ENCODE measurements at regions of chr5 and their contacts with region 1.

Region 1: GRCh38 chr5:132829742-132830435 is 558 bp downstream of the SHROOM1 start:
- DNase-seq: peak; percentile 78
- ATAC-seq: peak; percentile 86
- H3K4me3 Mint-ChIP-seq: peak overlapping the region; percentile 91
- H3K27ac Mint-ChIP-seq: peak overlapping the region; percentile 41
- H3K4me1 Mint-ChIP-seq: peaks cover 14% of the 10 kb centered on the region
- H3K27me3 Mint-ChIP-seq: peaks cover 24% of the 10 kb centered on the region
- CTCF ChIP-seq: peak; percentile 27

Region 2: DNA sequence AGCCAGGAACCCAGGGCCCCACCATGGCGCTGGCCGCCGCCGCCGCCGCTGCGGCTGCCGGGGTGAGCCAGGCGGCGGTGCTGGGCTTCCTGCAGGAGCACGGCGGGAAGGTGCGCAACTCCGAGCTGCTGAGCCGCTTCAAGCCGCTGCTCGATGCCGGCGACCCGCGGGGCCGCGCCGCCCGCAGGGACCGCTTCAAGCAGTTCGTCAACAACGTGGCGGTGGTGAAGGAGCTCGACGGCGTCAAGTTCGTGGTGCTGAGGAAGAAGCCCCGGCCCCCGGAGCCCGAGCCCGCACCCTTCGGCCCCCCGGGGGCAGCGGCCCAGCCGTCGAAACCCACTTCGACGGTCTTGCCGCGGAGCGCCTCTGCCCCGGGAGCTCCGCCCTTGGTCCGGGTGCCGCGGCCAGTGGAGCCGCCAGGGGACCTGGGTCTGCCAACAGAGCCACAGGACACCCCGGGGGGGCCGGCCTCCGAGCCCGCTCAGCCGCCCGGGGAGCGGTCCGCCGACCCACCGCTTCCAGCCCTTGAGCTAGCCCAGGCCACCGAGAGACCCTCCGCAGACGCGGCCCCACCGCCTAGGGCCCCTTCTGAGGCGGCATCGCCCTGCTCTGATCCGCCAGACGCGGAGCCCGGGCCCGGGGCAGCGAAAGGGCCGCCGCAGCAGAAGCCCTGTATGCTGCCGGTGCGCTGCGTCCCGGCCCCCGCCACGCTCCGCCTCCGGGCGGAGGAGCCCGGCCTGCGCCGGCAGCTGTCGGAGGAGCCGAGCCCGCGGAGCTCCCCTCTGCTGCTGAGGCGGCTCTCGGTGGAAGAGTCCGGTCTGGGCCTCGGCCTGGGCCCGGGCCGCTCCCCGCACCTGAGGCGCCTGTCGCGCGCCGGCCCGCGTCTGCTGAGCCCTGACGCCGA is 16.0 kb before region 1 on chr5:
- CTCF ChIA-PET with region 1: interaction called, 12 read pairs
- POLR2A ChIA-PET with region 1: no interaction called
- intact Hi-C with region 1: loop called (anchors 2 kb)
- DNase-seq: peak; percentile 47
- ATAC-seq: peak; percentile 63
- H3K4me3 Mint-ChIP-seq: no peak overlapping the region
- H3K27ac Mint-ChIP-seq: no peak overlapping the region
- H3K4me1 Mint-ChIP-seq: peaks cover 10% of the 10 kb centered on the region
- H3K27me3 Mint-ChIP-seq: peaks cover 32% of the 10 kb centered on the region
- CTCF ChIP-seq: no peak

Region 3: DNA sequence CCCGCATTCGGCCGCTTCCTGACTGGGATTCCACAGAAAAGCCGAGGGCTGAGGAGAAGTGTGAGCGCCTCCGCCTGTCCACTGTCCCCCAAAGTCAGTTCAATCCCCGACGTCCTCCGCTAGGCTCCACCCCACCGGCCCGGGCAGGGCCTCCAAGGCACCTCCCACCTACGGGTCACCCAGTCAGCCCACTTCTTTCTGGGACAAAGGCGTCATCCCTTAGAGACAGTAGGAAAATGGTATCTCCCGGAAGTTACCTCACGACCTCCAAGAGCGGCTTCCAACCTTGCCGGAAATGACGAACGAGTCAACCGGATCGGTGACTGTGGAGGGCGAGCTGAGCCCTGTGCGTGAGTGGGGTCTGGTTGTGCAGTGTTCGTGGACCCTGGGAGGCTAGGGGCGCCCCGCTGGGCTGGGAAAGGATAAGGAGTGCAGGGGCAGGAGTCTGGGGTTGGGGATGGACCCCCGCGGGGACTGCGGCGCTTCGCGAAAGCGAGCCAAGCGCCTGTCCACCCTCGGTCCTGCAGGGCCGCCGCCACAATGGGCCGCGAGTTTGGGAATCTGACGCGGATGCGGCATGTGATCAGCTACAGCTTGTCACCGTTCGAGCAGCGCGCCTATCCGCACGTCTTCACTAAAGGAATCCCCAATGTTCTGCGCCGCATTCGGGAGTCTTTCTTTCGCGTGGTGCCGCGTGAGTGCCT is 36.6 kb after region 1 on chr5 and contains the starts of genes GDF9 and UQCRQ:
- CTCF ChIA-PET with region 1: interaction called, 3 read pairs
- POLR2A ChIA-PET with region 1: no interaction called
- intact Hi-C with region 1: loop called (anchors 1 kb)
- DNase-seq: peak; percentile 77
- ATAC-seq: peak; percentile 98
- H3K4me3 Mint-ChIP-seq: peak within 1 kb of the TSS; percentile 99
- H3K27ac Mint-ChIP-seq: peak within 1 kb of the TSS; percentile 98
- H3K4me1 Mint-ChIP-seq: peaks cover 25% of the 10 kb centered on the region
- H3K27me3 Mint-ChIP-seq: no peaks in the 10 kb centered on the region
- CTCF ChIP-seq: no peak
- total RNA-seq, gene GDF9: 0.29 and 0.39 TPM in 2 replicates
- total RNA-seq, gene UQCRQ: 197 and 218 TPM in 2 replicates

Region 4: DNA sequence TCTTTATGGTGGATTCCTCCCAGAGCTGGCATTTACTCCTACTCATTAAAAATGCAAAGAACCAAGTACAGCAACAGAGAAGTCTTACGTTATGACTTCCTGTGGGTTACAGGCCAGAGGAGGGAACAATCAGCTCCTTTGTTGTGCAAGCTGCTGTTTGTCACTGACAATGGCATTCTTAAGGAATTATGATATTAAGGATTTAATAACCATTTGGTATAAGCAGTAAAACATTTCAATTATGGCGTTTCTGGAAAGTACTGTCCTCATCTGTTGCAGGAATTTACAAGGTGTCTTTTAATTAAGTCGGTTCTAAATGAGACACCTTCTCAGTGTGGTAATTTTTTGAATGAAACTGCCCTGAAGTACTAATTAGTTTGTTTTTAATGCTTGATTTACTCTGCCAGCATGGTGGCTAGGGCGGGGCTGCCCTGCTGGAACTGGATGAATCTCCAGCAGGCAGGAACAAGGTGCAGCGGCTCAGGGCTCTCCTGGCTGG is 1224.0 kb after region 1 on chr5:
- CTCF ChIA-PET with region 1: no interaction called
- POLR2A ChIA-PET with region 1: no interaction called
- intact Hi-C with region 1: no loop called
- DNase-seq: no peak
- ATAC-seq: no peak
- H3K4me3 Mint-ChIP-seq: no peak overlapping the region
- H3K27ac Mint-ChIP-seq: no peak overlapping the region
- H3K4me1 Mint-ChIP-seq: peaks cover 7% of the 10 kb centered on the region
- H3K27me3 Mint-ChIP-seq: no peaks in the 10 kb centered on the region
- CTCF ChIP-seq: no peak